Left colon (tissue), 2 donors: ENCODE measurements at regions of chr20 and their contacts with region 1.

Region 1: DNA sequence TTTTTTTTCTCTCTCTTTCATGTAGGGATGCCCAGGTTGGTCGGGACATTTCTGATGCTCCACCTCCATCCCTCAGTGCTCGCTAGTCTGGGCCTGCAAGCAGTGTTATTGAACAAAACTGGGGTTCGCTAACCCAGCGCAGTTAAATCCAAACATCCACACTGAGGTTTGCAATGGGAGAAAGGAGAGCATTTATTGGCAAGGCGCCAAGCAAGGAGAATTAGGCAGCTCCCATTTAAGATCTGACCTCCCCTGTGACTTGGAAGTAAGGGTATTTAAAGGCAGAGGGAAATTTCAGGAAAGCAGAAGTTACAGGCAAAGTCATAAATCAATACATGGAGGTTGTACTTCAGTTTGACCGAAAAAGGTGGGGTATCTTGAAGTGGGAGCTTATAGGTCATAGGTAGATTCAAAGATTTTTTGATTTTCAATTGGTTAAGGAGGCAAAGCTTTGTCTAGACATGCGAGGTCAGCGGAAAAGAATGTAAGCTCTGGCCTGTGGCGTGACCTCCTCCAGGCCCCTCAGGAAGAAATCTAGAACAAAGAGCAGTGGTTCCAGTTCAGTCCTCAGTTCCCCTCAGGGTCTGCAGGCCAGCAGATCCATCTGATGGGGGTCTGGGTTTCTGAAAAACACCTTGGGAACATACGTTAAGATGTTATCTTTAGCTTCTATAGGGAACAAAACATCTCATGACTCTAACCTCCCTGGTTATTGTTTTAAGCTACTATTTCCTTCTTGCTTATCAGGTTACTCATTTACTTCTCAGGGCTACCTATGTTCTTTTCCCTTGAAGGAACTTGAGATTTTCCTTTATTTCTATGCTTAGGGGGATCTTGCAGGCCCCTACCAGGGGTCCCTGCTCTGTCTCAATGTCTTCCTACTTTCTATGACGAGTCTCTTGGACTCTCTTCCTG is 66.0 kb upstream of the KIF16B start:
- DNase-seq: no peak
- ATAC-seq: peak; percentile 74

Region 2: DNA sequence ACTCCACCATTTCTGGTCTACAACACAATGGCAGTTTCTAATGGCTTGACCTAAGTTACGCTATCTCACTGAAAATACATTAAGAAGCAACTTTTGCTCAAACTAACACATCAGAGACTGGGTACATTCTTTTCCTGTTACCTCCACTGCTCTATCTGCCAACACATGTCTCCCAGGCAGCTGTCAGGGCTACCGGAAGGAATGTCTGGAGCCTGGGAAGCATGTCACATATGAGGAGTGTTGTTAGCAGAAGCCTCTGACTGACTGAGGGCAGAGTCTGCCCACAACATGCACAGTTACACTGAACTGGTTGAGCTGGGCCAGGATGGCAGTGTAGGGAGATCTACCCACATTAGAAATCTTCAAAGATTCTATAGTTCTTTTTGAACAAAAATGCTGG is 330.5 kb before region 1 on chr20:
- intact Hi-C with region 1: no loop called
- DNase-seq: no peak
- ATAC-seq: no peak

Region 3: DNA sequence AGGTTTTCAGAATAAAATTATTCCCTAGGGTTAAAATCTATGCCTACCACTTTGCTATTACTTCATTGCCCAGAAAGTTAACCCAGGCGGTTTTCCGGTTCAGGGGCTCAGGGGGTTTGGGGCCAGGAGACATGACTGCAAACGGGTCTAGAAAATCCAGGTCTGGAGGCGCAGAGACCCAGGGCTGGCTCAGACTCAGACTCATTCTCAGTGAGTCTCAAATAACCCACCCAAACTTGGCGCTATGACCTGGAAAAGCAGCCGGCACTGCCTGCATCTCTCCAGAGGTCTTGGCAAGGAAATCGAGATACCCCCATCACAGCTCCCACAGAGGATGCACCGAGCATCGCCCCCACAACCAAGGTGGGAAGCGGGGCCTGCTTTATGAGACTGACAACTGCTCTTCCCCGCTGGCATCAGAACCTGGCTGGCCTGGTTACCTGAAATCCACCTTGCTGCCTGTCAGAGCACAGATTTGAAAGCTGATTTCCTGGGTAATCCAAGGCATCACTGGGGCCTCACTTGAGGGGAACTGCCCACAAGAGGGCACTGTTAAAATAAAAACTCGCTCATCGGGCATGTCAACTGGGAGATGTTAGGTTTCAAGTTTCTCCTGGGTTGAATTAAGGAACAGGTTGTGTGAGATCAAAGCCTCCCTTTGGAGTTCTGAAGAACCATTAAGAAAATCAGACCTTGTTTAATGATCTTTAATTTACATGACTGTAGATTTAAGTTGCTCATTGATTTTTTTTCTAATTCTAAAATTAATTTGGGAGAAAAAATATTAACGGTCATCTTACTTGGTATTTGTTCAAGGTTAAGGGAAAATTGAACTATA is 121.1 kb before region 1 on chr20:
- intact Hi-C with region 1: loop called in 1 of 2 experiments (anchors 5 kb)
- DNase-seq: peak in 1 of 2 donors; percentile 44
- ATAC-seq: peak; percentile 94

Region 4: DNA sequence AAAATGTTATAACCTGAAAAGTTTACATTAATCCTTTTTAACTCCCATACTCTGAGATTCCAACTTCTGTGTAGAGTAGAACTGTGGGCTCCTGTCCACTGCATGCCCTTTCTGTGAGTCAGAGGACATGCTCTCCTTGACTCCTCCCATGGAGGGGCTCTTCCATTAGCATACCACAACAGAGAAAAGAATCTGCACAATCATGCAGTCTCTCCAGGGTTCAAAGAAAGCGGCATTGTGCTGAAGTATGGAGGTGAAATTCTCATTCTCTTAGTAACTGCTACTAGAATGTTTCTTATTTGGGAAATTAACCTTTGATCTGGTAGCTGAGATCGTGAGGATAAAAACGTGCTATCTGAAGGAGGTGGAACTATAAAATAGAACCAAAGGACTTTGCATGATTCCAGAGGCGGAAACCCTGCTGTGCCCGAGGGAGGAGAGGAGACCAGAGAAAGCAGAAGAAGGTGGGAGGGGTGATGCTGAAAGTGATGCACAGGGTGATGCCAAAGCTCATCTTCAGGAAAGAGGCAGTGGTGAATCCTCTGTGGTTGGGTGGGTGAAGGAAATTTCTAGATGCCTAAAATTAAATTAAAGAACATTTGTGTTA is 385.3 kb after region 1 on chr20:
- intact Hi-C with region 1: no loop called
- DNase-seq: no peak
- ATAC-seq: no peak